ENCODE measurements at regions of chr9 and their contacts with region 1.

Region 1: DNA sequence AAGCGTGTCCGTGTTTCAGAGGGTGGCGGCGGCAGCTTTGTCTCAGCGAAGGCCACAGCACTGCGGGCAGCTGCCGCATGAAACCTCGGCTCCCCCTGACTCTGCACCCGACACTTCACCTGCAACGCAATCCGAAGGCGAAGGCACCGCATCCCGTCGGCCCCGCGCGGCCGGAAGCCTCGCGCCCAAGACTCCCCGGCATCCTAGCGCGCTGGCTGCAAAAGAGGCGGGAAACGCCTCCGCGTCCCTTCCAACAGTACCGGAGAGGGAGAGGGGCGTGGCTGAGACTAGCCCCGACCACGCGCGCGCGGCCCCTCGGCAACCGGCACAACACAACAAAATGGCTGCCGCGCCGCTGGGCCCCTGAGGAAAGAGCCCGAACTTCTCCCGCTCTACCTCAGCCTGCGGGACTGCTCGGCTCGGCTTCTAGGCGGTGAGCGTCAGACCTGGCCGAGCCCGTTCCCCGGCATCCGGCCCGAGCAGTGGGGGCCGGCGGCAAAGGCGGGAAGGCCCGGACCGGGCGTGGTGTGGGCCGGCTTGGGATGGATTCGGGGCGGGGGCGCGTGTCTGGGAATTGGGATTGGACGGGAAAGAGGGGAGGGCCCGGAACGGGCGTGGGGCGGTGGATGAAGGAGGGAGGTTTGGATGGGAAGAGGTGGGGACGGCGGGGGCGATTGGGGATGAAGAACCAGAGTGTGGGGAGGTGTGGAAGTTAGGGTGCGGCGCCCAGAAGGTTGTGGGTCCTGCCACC is at the start of gene CNTRL:
- DNase-seq: peak; percentile 85
- ATAC-seq: peak; percentile 91
- H3K4me3 ChIP-seq: peak within 1 kb of the TSS; percentile 73
- H3K27ac ChIP-seq: peak within 1 kb of the TSS; percentile 85
- H3K4me1 ChIP-seq: peaks cover 1% of the 10 kb centered on the region; the same call in 1 of the 2 replicates
- H3K27me3 ChIP-seq: no peaks in the 10 kb centered on the region
- CTCF ChIP-seq: no peak
- POLR2A ChIP-seq: peak; percentile 57; the same call in 1 of the 2 replicates
- RAD21 ChIP-seq: no peak
- total RNA-seq, gene CNTRL: 7.3 and 10.6 TPM in 2 replicates

Region 2: GRCh38 chr9:120875954-120876841 is 198.6 kb before region 1 on chr9:
- CTCF ChIA-PET with region 1: no interaction called
- POLR2A ChIA-PET with region 1: no interaction called
- dilution Hi-C with region 1: no loop called
- in situ Hi-C with region 1: no loop called
- intact Hi-C with region 1: loop called (anchors 5 kb)
- DNase-seq: peak; percentile 85
- ATAC-seq: peak; percentile 72
- H3K4me3 ChIP-seq: peak overlapping the region; percentile 59
- H3K27ac ChIP-seq: peak overlapping the region; percentile 76
- H3K4me1 ChIP-seq: peaks cover 15% of the 10 kb centered on the region
- H3K27me3 ChIP-seq: no peaks in the 10 kb centered on the region
- CTCF ChIP-seq: no peak
- POLR2A ChIP-seq: no peak; the same call in 1 of the 2 replicates
- RAD21 ChIP-seq: no peak

Region 3: GRCh38 chr9:121059998-121060636 is 14.7 kb before region 1 on chr9:
- CTCF ChIA-PET with region 1: interaction called, 10 read pairs
- POLR2A ChIA-PET with region 1: no interaction called
- dilution Hi-C with region 1: no loop called
- in situ Hi-C with region 1: no loop called
- intact Hi-C with region 1: loop called (anchors 1 kb)
- DNase-seq: peak; percentile 84
- ATAC-seq: peak; percentile 80
- H3K4me3 ChIP-seq: no peak overlapping the region
- H3K27ac ChIP-seq: no peak overlapping the region
- H3K4me1 ChIP-seq: peaks cover 1% of the 10 kb centered on the region; the same call in 1 of the 2 replicates
- H3K27me3 ChIP-seq: no peaks in the 10 kb centered on the region
- CTCF ChIP-seq: peak; percentile 74
- POLR2A ChIP-seq: no peak
- RAD21 ChIP-seq: peak; percentile 65

Region 4: GRCh38 chr9:121141706-121142105 is 66.9 kb after region 1 on chr9:
- CTCF ChIA-PET with region 1: no interaction called
- POLR2A ChIA-PET with region 1: no interaction called
- dilution Hi-C with region 1: no loop called
- in situ Hi-C with region 1: no loop called
- intact Hi-C with region 1: no loop called
- DNase-seq: no peak
- ATAC-seq: no peak
- H3K4me3 ChIP-seq: no peak overlapping the region
- H3K27ac ChIP-seq: no peak overlapping the region
- H3K4me1 ChIP-seq: no peaks in the 10 kb centered on the region
- H3K27me3 ChIP-seq: no peaks in the 10 kb centered on the region
- CTCF ChIP-seq: no peak
- POLR2A ChIP-seq: no peak
- RAD21 ChIP-seq: no peak

Measured in IMR-90 (cell line).